Naive thymus-derived CD4-positive, alpha-beta T cell (primary cell): ENCODE measurements at regions of chr19 and their contacts with region 1.

Region 1: DNA sequence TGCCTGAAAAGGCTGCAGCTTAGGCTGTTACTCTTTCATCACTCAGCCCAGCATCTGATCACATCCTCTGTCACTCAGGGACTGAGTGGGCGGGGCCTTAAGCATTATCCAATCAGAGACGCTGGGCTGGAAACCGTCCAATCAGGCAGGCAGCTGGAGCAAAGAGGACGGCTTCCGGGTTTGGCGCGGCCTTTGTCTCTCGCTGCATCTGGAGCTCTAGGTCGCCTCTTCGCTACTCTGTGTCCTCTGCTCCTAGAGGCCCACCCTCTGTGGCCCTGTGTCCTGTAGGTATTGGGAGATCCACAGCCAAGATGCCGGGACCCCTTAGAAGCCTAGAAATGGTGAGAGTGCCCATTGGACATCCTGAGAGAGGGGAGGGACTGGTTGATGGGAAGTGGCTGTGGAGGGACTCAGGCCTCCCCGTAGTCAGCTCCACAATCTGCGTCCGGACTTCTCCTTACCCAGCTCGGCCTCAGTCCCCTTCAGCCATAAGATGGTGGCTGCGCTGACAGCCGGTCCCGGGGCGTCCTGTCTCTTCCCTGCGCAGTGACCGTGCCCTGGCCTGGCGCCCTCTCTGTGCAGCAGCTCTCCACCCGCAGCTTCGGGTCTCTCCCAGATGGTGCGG is at the start of gene ZNF486:
- DNase-seq: peak; percentile 73 to 94 (median 90)
- ATAC-seq: peak; percentile 99
- H3K4me3 ChIP-seq: peak within 1 kb of the TSS; percentile 85
- H3K4me3 Mint-ChIP-seq: peak within 1 kb of the TSS; percentile 90 to 99 (median 95)
- H3K27ac ChIP-seq: peak within 1 kb of the TSS; percentile 76
- H3K27ac Mint-ChIP-seq: peak within 1 kb of the TSS; percentile 83 to 98 (median 90)
- H3K4me1 ChIP-seq: peaks cover 9 to 13% of the 10 kb centered on the region in 2 donors
- H3K4me1 Mint-ChIP-seq: peaks cover 13 to 42% (median 36%) of the 10 kb centered on the region in 7 donors
- H3K27me3 ChIP-seq: no peaks in the 10 kb centered on the region
- H3K27me3 Mint-ChIP-seq: no peaks in the 10 kb centered on the region
- total RNA-seq, gene ZNF486: 3.3 to 10.3 (median 4.8) TPM

Region 2: DNA sequence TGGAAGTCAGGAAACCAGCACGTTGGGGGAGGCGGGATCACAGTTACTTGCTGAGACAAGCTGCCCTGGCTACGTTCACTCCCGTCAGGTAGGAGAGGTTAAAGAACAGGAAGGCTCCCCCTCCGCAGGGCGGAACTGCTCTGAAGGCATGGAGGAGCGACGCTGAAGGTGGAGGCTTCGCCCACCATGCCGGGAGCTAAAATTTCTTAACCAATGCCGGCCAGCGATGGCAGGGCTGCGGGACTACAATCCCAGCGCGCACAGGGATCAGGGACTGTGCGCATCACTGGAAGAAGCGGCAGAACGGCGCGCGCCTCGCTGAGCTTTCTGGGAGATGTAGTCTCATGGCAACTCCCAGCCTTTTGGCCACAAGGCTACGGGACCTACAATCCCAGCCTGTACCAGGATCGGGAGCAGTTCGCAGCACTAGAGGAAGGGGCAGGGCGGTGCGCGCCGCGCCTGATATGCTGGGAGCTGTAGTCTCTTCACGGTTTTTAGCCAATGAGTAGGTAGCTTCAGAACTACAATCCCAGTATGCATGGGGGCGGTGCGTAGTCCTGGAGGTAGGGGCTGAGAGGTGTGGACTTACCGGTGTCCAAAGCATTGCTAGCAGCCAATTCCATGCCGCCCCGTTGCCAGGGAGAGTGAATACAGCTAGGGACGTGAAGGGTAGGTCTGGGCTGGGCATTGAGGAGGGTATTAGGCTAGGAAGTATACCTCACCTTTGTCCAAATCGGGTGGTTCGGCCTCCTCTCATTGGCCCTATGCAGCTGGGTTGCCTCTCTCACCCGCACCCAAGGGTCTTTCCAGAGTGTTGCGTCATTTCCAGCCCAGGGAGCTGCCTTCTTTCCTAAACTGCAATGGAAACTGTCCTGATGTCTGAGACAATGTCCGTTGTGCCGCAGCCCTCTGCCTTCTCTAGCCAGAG is 115.0 kb before region 1 on chr19:
- CTCF ChIA-PET with region 1: interaction called, 3 read pairs
- POLR2A ChIA-PET with region 1: interaction called, 8 read pairs
- intact Hi-C with region 1: loop called in 1 of 2 experiments (anchors 1 kb)
- DNase-seq: peak; percentile 17 to 50 (median 44)
- ATAC-seq: peak; percentile 93
- H3K4me3 ChIP-seq: peak overlapping the region; percentile 98
- H3K4me3 Mint-ChIP-seq: peak overlapping the region; percentile 95 to 100 (median 98)
- H3K27ac ChIP-seq: peak overlapping the region; percentile 77
- H3K27ac Mint-ChIP-seq: peak overlapping the region; percentile 83 to 97 (median 94)
- H3K4me1 ChIP-seq: peaks cover 8% of the 10 kb centered on the region in 2 donors
- H3K4me1 Mint-ChIP-seq: peaks cover 0 to 17% (median 8%) of the 10 kb centered on the region in 7 donors
- H3K27me3 ChIP-seq: no peaks in the 10 kb centered on the region
- H3K27me3 Mint-ChIP-seq: peaks cover 0 to 4% (median 0%) of the 10 kb centered on the region in 5 donors

Region 3: GRCh38 chr19:20237761-20238623 is 70.9 kb after region 1 on chr19:
- CTCF ChIA-PET with region 1: no interaction called
- POLR2A ChIA-PET with region 1: interaction called, 4 read pairs
- intact Hi-C with region 1: loop called in 1 of 2 experiments (anchors 1 kb)
- DNase-seq: peak; percentile 70 to 90 (median 83)
- ATAC-seq: peak; percentile 97
- H3K4me3 ChIP-seq: peak overlapping the region; percentile 71
- H3K4me3 Mint-ChIP-seq: peak overlapping the region; percentile 83 to 98 (median 96)
- H3K27ac ChIP-seq: peak overlapping the region; percentile 63
- H3K27ac Mint-ChIP-seq: peak overlapping the region; percentile 55 to 95 (median 87)
- H3K4me1 ChIP-seq: peaks cover 0 to 4% of the 10 kb centered on the region in 2 donors
- H3K4me1 Mint-ChIP-seq: peaks cover 5 to 12% (median 10%) of the 10 kb centered on the region in 7 donors
- H3K27me3 ChIP-seq: no peaks in the 10 kb centered on the region
- H3K27me3 Mint-ChIP-seq: no peaks in the 10 kb centered on the region

Region 4: DNA sequence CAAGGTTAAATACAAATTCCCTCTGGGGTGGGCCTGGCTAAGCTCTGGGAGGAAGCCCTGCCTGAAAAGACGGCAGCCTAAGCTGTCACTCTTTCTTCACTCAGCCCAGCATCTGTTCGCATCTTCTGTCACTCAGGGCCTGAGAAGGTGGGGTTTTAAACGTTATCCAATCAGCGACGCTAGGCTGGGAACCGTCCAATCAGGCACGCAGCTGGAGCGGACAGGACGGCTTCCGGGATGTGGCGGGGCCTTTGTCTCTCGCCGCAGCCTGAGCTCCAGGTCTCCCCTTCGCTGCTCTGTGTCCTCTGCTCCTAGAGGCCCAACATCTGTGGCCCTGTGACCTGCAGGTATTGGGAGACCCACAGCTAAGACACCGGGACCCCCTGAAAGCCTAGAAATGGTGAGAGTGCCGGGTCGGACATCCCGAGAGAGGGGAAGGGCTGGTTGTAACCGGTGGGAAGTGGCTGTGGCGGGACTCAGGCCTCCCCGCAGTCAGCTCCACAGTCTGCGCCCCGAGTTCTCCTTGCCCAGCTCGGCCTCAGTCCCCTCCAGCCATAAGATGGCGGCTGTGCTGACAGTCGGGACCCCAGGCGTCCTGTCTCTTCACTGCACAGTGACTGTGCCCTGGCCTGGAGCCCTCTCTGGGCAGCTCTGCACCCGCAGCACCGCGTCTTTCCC is 974.8 kb after region 1 on chr19 and contains the start of gene ZNF431:
- CTCF ChIA-PET with region 1: no interaction called
- POLR2A ChIA-PET with region 1: interaction called, 3 read pairs
- intact Hi-C with region 1: loop called in 1 of 2 experiments (anchors 5 kb)
- DNase-seq: peak; percentile 63 to 95 (median 91)
- ATAC-seq: peak; percentile 100
- H3K4me3 ChIP-seq: peak within 1 kb of the TSS; percentile 94
- H3K4me3 Mint-ChIP-seq: peak within 1 kb of the TSS; percentile 95 to 98 (median 97)
- H3K27ac ChIP-seq: peak within 1 kb of the TSS; percentile 91
- H3K27ac Mint-ChIP-seq: peak within 1 kb of the TSS; percentile 93 to 99 (median 96)
- H3K4me1 ChIP-seq: peaks cover 3 to 6% of the 10 kb centered on the region in 2 donors
- H3K4me1 Mint-ChIP-seq: peaks cover 20 to 69% (median 54%) of the 10 kb centered on the region in 7 donors
- H3K27me3 ChIP-seq: no peaks in the 10 kb centered on the region
- H3K27me3 Mint-ChIP-seq: no peaks in the 10 kb centered on the region
- total RNA-seq, gene ZNF431: 19.1 to 36.8 (median 25.4) TPM

Region 5: DNA sequence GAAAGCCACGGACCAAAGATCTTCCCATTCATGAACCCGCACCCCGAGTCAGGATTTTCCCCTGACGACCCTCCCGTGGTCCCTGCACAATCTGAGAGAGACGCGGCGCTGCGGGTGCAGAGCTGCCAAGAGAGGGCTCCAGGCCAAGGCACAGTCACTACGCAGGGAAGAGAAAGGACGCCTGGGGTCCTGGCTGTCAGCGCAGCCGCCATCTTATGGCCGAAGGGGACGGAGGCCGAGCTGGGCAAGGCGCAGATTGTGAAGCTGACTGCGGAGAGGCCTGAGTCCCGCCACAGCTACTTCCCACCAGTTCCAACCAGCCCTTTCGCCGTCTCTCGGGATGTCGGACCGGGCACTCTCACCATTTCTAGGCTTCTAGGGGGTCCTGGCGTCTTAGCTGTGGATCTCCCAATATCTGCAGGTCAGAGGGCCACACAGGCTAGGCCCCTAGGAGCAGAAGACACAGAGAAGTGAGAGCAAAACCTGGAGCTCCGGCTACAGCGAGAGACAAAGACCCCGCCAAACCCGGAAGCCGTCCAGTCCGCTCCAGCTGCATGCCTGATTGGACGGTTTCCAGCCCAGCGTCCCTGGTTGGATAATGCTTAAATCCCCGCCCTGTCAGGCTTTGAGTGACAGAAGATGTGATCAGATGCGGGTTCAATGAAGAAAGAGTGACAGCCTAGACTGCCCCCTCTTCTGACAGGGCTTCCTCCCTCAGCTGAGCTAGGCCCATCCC is 1600.1 kb after region 1 on chr19 and contains the start of gene ZNF100:
- CTCF ChIA-PET with region 1: no interaction called
- POLR2A ChIA-PET with region 1: no interaction called
- intact Hi-C with region 1: loop called in 1 of 2 experiments (anchors 5 kb)
- DNase-seq: peak; percentile 64 to 88 (median 80)
- ATAC-seq: peak; percentile 98
- H3K4me3 ChIP-seq: peak within 1 kb of the TSS; percentile 97
- H3K4me3 Mint-ChIP-seq: peak within 1 kb of the TSS; percentile 92 to 98 (median 97)
- H3K27ac ChIP-seq: peak within 1 kb of the TSS; percentile 81
- H3K27ac Mint-ChIP-seq: peak within 1 kb of the TSS; percentile 89 to 98 (median 92)
- H3K4me1 ChIP-seq: no peaks in the 10 kb centered on the region
- H3K4me1 Mint-ChIP-seq: peaks cover 7 to 43% (median 27%) of the 10 kb centered on the region in 7 donors
- H3K27me3 ChIP-seq: no peaks in the 10 kb centered on the region
- H3K27me3 Mint-ChIP-seq: no peaks in the 10 kb centered on the region
- total RNA-seq, gene ZNF100: 9.5 to 22.5 (median 18.4) TPM